Endothelial cell of umbilical vein (primary cell): ENCODE measurements at regions of chr1 and their contacts with region 1.

Region 1: GRCh38 chr1:62175568-62176179 is 19.0 kb upstream of the L1TD1 start:
- DNase-seq: peak; percentile 49
- H3K4me3 ChIP-seq: no peak overlapping the region
- H3K27ac ChIP-seq: no peak overlapping the region
- H3K4me1 ChIP-seq: no peaks in the 10 kb centered on the region
- H3K27me3 ChIP-seq: no peaks in the 10 kb centered on the region
- CTCF ChIP-seq: peak; percentile 51 to 67
- POLR2A ChIP-seq: no peak

Region 2: DNA sequence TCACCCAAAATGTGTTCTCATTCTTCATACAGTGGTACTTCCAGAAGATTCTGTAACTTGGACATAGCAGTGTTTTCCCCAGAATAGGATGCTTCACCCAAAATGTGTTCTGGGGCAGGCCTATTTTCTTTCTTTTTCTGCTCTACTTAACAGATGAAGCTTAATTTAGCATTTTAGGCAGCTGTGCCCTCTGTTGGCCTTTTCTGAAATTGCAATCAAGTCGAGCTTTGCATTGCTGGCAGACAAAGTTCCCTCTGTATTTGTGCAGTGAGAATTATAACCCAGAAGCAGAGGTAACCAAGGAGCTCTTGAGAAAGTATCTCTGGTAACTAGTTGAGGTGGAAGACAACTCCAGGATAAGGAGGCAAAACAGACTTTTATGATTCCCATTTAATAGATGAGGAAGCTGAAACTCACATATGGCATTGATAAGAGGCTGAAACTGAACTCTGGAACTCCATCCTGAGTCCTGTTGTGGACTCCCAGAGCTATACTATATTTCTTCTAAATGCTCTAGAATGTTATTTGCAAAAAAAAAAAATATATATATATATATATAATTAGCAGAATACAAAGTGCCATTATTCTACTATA is 31.3 kb before region 1 on chr1:
- CTCF ChIA-PET with region 1: interaction called, 12 read pairs
- POLR2A ChIA-PET with region 1: interaction called, 3 read pairs
- dilution Hi-C with region 1: no loop called
- intact Hi-C with region 1: no loop called
- DNase-seq: peak; percentile 59
- H3K4me3 ChIP-seq: no peak overlapping the region
- H3K27ac ChIP-seq: no peak overlapping the region
- H3K4me1 ChIP-seq: no peaks in the 10 kb centered on the region
- H3K27me3 ChIP-seq: no peaks in the 10 kb centered on the region
- CTCF ChIP-seq: peak; percentile 53 to 70
- POLR2A ChIP-seq: no peak

Region 3: DNA sequence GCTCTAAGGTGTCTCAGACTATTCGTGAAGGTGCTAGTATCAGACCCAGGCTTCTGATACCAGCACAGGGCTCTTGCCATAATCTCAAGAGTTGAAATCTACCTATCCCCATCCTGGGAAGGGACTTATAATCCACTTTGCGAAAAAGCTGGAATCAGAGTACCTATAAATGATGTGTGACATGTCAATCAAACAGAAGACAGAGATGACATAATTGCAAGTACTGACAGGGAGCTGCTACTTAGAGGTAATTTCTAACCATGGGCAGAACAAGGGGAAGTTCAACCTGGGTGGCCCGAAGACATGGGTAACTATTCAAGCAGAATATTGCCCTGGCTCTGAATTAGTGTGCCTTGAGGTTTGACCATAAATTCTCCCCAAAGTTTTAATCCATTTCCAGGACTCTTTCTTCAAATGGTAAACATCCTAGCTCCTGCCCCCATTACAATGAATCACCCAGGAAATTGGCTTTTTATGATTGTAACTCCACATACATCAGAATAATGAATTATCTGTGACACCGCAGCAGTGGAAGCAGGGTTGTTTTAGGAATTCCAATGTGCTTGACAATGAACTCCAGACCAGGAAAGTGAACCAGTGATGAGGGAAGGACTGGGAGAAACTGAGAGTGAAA is 106.4 kb after region 1 on chr1:
- CTCF ChIA-PET with region 1: no interaction called
- POLR2A ChIA-PET with region 1: no interaction called
- dilution Hi-C with region 1: no loop called
- intact Hi-C with region 1: no loop called
- DNase-seq: no peak
- H3K4me3 ChIP-seq: no peak overlapping the region
- H3K27ac ChIP-seq: no peak overlapping the region
- H3K4me1 ChIP-seq: peaks cover 2% of the 10 kb centered on the region
- H3K27me3 ChIP-seq: peaks cover 3 to 6% of the 10 kb centered on the region in 2 experiments
- CTCF ChIP-seq: no peak
- POLR2A ChIP-seq: no peak

Region 4: GRCh38 chr1:62407405-62408009 is 231.8 kb after region 1 on chr1:
- CTCF ChIA-PET with region 1: interaction called, 183 read pairs
- POLR2A ChIA-PET with region 1: no interaction called
- dilution Hi-C with region 1: no loop called
- intact Hi-C with region 1: loop called (anchors 1 kb)
- DNase-seq: peak; percentile 46
- H3K4me3 ChIP-seq: no peak overlapping the region
- H3K27ac ChIP-seq: no peak overlapping the region
- H3K4me1 ChIP-seq: no peaks in the 10 kb centered on the region
- H3K27me3 ChIP-seq: no peaks in the 10 kb centered on the region
- CTCF ChIP-seq: peak; percentile 55 to 56
- POLR2A ChIP-seq: no peak